Activated T-helper 1 cell treated with anti-CD3 and anti-CD28 coated beads, Interleukin-12 subunit alpha, Interleukin-12 subunit beta, Interleukin-2, Interleukin-4 antibody, amounts not matched to agents 30 ng/mL and 10 ng/mL and 1 ng/mL, durations not matched to agents 14 hours and 24 hours and 36 hours (primary cell): ENCODE measurements at regions of chr19 and their contacts with region 1.

Region 1: DNA sequence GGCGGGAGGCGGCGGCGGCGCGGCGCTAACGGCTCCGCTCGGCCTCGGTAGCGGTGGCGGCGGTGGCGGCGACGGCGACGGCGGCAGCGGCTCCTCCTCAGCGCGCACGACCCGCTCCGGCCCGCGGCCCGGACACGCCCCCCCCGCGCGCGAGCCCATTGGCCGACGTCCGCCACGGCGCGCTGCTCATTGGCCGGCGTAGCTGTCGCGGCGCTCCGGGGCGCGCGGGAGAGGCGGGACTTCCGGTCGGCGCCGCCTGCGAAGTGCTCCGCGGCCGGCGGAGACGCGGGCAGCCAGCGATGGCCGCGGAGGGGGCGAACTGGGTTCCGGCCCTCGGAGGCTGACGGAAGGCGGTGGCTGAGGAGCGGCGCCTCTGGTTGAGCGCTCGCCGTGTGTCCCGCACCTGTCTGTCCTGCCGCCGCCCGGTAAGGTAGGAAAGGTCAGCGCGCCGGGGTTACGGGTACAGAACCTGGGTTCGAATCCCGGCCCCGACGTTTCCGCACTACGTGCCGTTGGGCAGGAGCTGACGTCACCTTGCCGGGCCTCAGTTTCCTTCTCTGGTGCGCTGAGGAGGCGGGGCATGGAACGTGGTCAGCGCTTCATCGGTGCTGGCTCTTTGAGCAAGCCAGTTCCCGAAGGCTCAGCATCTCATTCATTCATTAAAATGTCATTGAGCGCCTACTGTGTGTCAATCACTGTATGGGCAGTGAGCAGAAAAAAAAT is at the start of gene ELAVL1:
- DNase-seq: peak; percentile 91
- H3K4me3 Mint-ChIP-seq: peak within 1 kb of the TSS; percentile 99
- H3K27ac Mint-ChIP-seq: peak within 1 kb of the TSS; percentile 94
- H3K4me1 Mint-ChIP-seq: peaks cover 34% of the 10 kb centered on the region
- H3K27me3 Mint-ChIP-seq: no peaks in the 10 kb centered on the region
- total RNA-seq, gene ELAVL1: 182 and 186 TPM in 2 replicates

Region 2: GRCh38 chr19:7970716-7971448 is 34.8 kb before region 1 on chr19:
- intact Hi-C with region 1: loop called (anchors 2 kb)
- DNase-seq: no peak
- H3K4me3 Mint-ChIP-seq: no peak overlapping the region
- H3K27ac Mint-ChIP-seq: no peak overlapping the region
- H3K4me1 Mint-ChIP-seq: peaks cover 4% of the 10 kb centered on the region
- H3K27me3 Mint-ChIP-seq: no peaks in the 10 kb centered on the region

Region 3: DNA sequence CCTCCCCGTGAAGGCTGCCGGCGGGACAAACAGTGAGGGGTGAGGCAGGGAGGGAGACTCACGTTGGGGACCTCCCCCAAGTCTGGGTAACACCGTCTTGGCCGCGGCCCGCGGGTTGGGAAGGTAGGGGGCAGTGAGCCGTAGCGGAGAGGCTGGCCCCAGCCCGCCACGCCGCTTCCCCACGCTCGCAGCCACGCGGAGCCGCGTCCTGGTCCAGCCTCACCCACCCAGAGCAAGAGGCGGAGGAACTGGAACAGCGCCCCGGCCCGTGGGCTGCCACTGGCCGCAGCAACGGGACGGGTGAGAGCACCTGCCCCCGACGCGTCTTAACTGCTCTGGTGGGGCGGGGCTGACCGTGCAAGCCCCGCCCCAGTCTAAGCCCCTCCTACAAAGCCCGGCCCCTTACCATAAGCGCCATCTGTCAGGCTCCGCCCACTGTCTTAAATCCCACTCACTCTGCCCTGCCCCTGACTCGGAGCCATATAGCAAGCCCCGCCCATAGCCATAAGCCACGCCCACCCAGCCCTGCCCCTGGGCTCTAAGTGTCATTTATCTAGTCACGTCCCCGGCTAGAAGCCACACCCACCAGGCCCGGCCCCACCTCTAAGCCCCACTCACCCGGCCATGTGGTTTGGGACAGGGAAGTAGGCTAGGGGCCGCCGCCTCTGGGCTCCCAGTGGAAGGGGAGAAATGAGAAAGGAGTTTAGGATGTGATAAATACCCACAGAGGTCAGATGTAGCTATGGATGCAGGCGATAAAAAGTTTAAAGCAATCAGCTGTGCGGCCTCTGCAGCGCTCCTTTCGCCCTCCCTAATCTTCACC is 44.8 kb after region 1 on chr19:
- intact Hi-C with region 1: loop called (anchors 1 kb)
- DNase-seq: peak; percentile 73
- H3K4me3 Mint-ChIP-seq: peak overlapping the region; percentile 49
- H3K27ac Mint-ChIP-seq: peak overlapping the region; percentile 52
- H3K4me1 Mint-ChIP-seq: peaks cover 27% of the 10 kb centered on the region
- H3K27me3 Mint-ChIP-seq: peaks cover 13% of the 10 kb centered on the region

Region 4: DNA sequence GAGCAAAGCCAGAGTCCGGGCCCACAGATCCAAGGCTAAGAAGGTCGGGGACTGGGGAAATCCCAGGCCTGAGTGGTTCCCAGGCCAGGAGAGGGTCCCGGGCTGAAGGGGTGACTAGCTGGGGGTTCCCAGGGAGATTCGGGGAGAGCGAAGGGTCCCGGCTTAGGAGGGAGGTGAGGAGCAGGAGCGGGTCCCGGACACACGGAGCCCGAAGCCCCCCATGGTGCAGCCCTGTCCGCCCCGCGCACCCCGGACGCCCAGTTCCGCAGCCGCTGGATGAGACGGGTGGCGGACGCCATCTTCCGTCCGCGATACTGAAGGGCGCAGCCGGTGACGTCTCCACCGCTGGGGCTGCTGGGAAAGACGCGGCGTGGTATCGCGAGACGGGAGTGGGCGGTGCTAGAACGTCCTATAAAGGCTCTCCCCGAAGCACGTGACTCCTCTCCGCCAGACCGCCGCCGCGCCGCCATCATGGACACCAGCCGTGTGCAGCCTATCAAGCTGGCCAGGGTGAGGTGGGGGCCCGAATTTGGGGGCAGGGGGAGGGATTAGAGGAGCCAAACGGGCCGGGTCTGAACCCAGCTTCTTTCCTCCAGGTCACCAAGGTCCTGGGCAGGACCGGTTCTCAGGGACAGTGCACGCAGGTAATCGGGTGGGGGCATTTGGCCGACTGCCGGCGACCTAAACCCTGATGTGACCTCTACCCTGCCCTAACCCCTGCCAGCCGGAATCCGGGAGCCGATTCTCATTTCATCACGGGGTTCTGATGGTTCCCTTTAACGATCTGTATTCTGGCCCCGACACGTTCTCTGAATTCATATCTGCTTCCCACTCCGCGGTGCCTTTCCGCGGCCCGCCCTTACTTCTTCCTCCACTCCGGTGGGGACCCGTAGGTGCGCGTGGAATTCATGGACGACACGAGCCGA is 315.6 kb after region 1 on chr19 and contains the starts of genes NDUFA7 and RPS28:
- intact Hi-C with region 1: loop called (anchors 5 kb)
- DNase-seq: peak; percentile 96
- H3K4me3 Mint-ChIP-seq: peak within 1 kb of the TSS; percentile 100
- H3K27ac Mint-ChIP-seq: peak within 1 kb of the TSS; percentile 99
- H3K4me1 Mint-ChIP-seq: peaks cover 31% of the 10 kb centered on the region
- H3K27me3 Mint-ChIP-seq: no peaks in the 10 kb centered on the region
- total RNA-seq, gene NDUFA7: 51.1 and 51.8 TPM in 2 replicates
- total RNA-seq, gene RPS28: 1,836 and 1,872 TPM in 2 replicates